Right ventricle myocardium inferior (tissue), 1 donor: ENCODE measurements at regions of chr17 and their contacts with region 1.

Region 1: DNA sequence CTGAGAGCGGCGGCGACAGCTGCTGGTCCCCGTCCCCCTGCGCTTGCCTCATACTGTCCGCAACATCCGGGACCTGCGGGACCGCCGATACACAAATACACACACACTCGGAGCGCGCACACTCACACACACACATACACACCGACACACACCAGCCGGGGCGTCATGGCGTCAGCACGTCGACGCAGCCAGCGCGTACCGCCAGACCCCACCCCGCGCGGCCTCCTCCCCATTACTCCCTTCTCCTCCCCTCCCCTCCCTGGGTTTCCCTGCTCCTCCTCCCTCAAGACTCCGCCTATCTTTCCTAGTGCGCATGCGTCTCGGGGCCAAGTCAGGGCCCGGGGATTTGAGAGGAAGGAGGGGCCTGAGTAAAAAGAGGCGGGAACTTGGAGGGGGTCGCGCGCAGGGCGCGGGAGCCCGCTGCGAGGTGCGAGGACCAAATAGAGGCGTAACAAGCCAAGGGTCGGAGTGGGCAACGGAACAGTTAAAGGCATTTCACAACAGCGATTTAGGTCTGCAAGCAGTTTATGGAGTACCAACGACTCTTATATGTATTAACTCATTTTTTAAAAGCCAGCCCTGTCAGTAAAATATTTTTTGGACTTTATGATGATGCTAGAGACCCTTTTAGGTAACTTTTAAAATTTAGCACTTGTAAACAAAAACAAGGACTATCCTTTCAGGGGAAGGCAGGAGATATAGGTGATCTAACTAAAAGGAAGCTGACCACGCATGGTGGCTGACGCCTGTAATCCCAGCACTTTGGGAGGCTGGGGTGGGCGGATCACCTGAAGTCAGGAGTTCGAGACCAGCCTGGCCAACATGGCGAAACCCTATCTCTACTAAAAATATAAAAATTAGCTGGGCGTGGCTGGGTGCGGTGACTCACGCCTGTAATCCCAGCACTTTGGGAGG is at the start of gene SPOP:
- DNase-seq: peak; percentile 100
- ATAC-seq: peak; percentile 98
- total RNA-seq, gene SPOP: 73.1 TPM

Region 2: DNA sequence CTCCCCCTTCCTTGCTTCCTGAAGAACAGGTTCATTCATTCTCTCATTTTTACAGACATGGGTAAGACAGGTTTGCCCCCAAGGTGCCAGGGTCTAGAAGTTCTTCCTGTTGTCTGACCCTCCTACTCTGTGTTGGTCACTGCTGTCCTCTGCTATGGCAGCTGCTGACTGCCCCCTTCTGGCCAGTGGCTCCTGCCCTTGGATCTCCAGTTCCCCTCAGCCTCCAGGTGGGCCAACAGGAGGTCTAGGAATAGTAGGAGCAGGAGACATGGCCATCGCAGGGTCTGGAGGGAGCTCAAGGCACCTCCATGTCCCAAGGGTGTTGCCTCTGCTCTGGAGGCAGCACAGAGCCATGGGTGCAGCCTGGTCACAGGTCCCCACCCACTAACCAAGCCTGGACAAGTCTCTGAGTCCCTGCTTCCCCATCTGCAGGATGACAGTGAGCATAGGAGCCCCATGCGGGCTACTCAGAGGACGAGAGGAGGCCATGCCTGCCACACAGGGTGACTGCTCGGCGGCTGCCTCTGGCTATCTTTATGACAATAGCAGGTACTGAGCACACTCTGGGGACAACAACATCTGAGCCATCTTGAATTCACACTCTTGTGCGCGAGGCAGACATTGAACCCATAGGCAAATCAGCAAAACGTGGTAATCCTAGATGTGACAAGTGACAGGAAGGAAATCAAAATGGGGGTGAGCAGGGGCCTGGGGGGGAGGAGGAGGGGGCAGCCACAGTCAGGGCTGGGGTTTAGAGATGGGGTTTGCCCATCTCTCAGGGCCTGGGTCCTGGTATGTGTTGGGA is 129.5 kb before region 1 on chr17:
- intact Hi-C with region 1: no loop called
- DNase-seq: peak; percentile 46
- ATAC-seq: peak; percentile 69

Region 3: GRCh38 chr17:49616601-49617131 is 61.5 kb before region 1 on chr17:
- intact Hi-C with region 1: loop called (anchors 2 kb)
- DNase-seq: peak; percentile 76
- ATAC-seq: peak; percentile 95

Region 4: GRCh38 chr17:49634485-49634860 is 43.7 kb before region 1 on chr17:
- intact Hi-C with region 1: loop called (anchors 5 kb)
- DNase-seq: no peak
- ATAC-seq: peak; percentile 37